ENCODE measurements at regions of chr1 and their contacts with region 1.

Region 1: GRCh38 chr1:167499664-167500101 is 18.6 kb downstream of the CD247 start:
- DNase-seq: peak; percentile 60
- ATAC-seq: peak; percentile 54
- H3K4me3 Mint-ChIP-seq: peak overlapping the region; percentile 34
- H3K27ac Mint-ChIP-seq: peak overlapping the region; percentile 81
- H3K4me1 Mint-ChIP-seq: peaks cover 93% of the 10 kb centered on the region
- H3K27me3 Mint-ChIP-seq: no peaks in the 10 kb centered on the region

Region 2: GRCh38 chr1:167439301-167439988 is 60.2 kb before region 1 on chr1:
- CTCF ChIA-PET with region 1: no interaction called
- DNase-seq: no peak
- ATAC-seq: no peak
- H3K4me3 Mint-ChIP-seq: no peak overlapping the region
- H3K27ac Mint-ChIP-seq: peak overlapping the region; percentile 94
- H3K4me1 Mint-ChIP-seq: peaks cover 75% of the 10 kb centered on the region
- H3K27me3 Mint-ChIP-seq: no peaks in the 10 kb centered on the region

Region 3: GRCh38 chr1:167486090-167486824 is 13.4 kb before region 1 on chr1:
- CTCF ChIA-PET with region 1: interaction called, 27 read pairs
- DNase-seq: peak; percentile 55
- ATAC-seq: no peak
- H3K4me3 Mint-ChIP-seq: peak overlapping the region; percentile 27
- H3K27ac Mint-ChIP-seq: peak overlapping the region; percentile 80
- H3K4me1 Mint-ChIP-seq: peaks cover 96% of the 10 kb centered on the region
- H3K27me3 Mint-ChIP-seq: no peaks in the 10 kb centered on the region